Tibial artery (tissue), 4 donors: ENCODE measurements at regions of chr4 and their contacts with region 1.

Region 1: DNA sequence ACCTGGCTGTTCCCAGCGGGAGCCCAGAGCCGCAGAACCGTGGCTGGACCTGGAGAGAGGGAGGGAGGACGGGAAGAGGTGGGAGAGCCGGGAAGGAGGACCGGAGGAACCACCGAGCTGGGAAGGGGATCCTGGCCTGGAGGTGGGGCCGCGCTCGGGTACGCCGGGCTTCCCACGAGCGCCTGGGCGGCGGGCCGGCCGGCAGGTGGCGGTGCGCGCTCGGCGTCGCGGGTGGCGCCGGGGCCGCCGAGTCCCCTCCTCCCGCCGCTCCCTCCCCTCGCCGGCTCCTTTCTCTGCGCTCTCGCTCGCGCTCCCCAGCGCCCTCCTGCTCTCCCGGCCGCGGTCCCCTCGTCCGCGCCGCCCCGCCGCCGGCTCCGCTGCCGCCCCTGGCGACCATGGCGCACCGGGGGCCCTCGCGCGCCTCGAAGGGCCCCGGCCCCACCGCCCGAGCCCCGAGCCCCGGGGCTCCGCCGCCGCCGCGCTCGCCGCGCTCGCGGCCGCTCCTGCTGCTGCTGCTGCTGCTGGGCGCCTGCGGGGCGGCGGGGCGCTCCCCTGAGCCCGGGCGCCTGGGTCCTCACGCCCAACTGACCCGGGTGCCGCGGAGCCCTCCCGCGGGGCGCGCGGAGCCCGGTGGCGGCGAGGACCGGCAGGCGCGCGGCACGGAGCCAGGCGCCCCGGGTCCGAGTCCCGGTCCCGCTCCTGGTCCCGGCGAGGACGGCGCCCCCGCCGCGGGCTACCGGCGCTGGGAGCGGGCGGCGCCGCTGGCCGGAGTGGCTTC is at the start of gene SORCS2:
- DNase-seq: peak; percentile 21 to 79
- H3K4me3 ChIP-seq: peak within 1 kb of the TSS; percentile 35 to 44
- H3K27ac ChIP-seq: no peak within 1 kb of the TSS
- H3K4me1 ChIP-seq: peaks cover 0 to 20% (median 17%) of the 10 kb centered on the region in 4 donors
- H3K27me3 ChIP-seq: peaks cover 0 to 71% of the 10 kb centered on the region in 2 donors
- CTCF ChIP-seq: peak; percentile 54 to 91

Region 2: GRCh38 chr4:6308899-6309643 is 883.4 kb before region 1 on chr4:
- intact Hi-C with region 1: no loop called
- DNase-seq: no peak
- H3K4me3 ChIP-seq: peak overlapping the region; percentile 29 to 54
- H3K27ac ChIP-seq: no peak overlapping the region
- H3K4me1 ChIP-seq: peaks cover 0 to 12% (median 6%) of the 10 kb centered on the region in 4 donors
- H3K27me3 ChIP-seq: peaks cover 0 to 12% of the 10 kb centered on the region in 2 donors
- CTCF ChIP-seq: no peak

Region 3: DNA sequence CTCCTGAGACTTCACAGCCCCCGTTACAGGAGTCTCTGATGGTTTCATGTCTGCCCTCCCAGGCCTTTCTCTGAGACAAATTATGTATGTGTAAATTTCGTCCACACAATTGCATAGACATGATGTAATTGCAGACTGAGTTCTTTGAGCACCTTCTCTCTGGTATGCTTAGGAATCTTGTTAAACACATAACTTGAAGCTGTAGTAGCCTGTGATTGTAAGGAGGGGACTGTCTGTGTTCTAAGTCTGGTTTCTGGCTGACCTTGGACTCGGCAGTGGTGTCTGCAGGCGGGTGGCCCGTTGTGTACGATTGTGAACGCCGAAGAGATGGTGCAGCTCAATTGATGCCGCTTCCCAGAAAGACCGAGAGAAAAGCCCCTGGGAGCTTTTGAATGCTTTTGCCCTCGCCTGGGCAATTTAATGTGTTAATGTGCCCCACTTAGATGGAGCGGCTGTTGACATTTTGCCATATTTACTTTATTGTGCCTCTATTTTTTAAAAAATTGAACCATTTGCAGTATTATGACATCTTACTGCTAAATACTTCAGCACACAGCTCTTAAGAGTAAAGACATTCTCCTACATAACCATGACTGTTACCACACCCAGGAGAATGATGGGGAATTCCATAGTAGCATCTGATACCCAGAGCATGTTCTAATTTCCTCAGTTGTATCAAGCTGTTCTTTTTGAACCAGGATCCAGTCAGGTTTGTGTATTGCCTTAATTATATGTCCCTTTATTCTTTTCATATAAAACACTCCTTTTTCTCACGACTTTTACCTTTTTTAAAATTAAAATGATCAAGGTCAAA is 207.6 kb before region 1 on chr4:
- intact Hi-C with region 1: no loop called
- DNase-seq: no peak
- H3K4me3 ChIP-seq: no peak overlapping the region
- H3K27ac ChIP-seq: peak overlapping the region; percentile 96 to 98
- H3K4me1 ChIP-seq: peaks cover 0 to 42% (median 33%) of the 10 kb centered on the region in 4 donors
- H3K27me3 ChIP-seq: no peaks in the 10 kb centered on the region
- CTCF ChIP-seq: no peak

Region 4: DNA sequence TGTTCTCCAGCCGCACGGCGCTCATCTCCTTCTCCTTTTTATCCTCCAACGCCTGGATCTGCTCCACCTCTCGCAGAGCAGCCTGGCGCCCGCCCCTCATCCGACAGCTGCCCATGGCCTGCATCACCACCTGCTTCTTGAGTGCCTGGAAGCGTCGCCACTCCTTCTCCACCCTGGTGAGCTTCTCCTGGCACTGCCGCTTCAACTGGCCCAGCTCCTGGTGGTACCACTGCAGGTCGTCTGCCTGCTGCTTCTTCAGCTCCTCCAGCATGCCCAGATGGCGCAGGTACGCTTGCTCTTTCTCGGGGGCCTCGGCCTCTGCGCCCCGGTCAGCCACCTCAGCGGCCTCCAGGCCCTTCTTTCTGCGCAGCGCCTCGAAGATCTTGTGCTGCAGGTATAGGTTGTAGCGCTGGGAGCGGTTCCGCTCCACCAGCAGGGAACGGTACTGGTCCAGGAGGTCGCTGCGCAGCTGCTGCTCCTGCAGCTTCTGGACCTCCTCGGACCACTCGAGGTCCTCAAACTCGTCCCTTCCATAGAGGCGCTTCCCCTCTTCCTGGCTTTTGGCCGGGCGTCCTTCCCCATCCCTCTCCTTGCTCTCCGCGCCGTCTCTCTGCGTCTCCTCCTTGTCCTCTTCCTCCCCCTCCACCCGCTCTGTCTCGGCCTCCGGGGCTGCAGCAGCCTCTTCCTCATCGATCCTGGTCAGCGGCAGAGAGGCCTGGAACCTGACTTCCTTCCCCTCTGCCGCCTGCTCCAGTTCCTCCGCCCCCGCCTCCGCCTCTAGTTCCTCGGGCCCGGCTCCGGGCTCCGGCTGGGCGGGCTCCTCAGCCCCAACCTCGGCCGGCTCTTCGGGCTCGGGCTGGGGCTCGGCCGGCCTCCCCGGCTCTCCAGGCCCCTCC is 150.4 kb before region 1 on chr4:
- intact Hi-C with region 1: no loop called
- DNase-seq: peak; percentile 63 to 77
- H3K4me3 ChIP-seq: peak overlapping the region; percentile 63 to 70
- H3K27ac ChIP-seq: peak overlapping the region; percentile 58 to 78
- H3K4me1 ChIP-seq: peaks cover 0 to 43% (median 37%) of the 10 kb centered on the region in 4 donors
- H3K27me3 ChIP-seq: no peaks in the 10 kb centered on the region
- CTCF ChIP-seq: no peak

Region 5: GRCh38 chr4:7295911-7296660 is 103.6 kb after region 1 on chr4:
- intact Hi-C with region 1: loop called (anchors 5 kb)
- DNase-seq: no peak
- H3K4me3 ChIP-seq: no peak overlapping the region
- H3K27ac ChIP-seq: no peak overlapping the region
- H3K4me1 ChIP-seq: peaks cover 3 to 19% (median 11%) of the 10 kb centered on the region in 4 donors
- H3K27me3 ChIP-seq: peaks cover 0 to 29% of the 10 kb centered on the region in 2 donors
- CTCF ChIP-seq: peak; percentile 50 to 65

Region 6: DNA sequence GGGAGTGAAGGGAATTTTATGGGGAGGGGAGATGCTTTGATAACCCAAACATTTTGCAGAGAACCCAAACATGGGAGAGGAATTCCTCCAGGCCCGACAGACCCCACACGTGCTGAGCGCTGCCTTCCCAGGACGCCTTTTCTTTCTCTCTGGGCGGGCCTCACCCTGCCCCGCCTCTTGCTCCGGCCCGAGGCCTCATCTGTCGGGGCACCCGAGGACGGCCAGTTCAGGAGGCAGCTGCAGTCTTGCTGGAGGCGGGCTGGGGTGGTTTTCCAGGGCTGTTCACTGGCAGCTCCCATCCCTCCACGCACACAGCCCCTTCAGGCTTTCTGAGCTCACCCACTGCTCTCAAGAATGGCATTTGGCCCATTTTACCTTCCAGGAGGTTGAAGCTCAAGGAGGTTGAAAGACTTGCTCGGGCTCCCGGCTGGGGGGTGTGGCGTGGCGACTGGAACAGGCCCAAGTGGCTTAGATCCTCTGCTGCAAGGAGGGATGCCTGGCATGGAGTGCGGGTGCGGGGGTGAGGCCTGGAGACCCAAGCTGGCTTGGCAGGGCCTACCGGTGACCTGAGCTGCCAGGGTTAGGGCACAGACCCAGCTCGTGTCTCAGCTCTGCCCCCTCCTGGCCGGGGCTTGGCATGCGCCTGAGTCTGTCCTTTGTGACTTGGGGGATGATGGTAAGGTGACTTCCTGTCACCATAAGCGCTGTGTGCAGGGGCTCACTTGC is 143.1 kb after region 1 on chr4:
- intact Hi-C with region 1: loop called (anchors 1 kb)
- DNase-seq: peak in 1 of 2 donors; percentile 73
- H3K4me3 ChIP-seq: no peak overlapping the region
- H3K27ac ChIP-seq: peak overlapping the region in 1 of 2 donors; percentile 36
- H3K4me1 ChIP-seq: peaks cover 0 to 23% (median 9%) of the 10 kb centered on the region in 4 donors
- H3K27me3 ChIP-seq: no peaks in the 10 kb centered on the region
- CTCF ChIP-seq: peak; percentile 37 to 50

Region 7: GRCh38 chr4:7595934-7596461 is 403.6 kb after region 1 on chr4:
- intact Hi-C with region 1: no loop called
- DNase-seq: no peak
- H3K4me3 ChIP-seq: no peak overlapping the region
- H3K27ac ChIP-seq: no peak overlapping the region
- H3K4me1 ChIP-seq: no peaks in the 10 kb centered on the region
- H3K27me3 ChIP-seq: peaks cover 0 to 46% of the 10 kb centered on the region in 2 donors
- CTCF ChIP-seq: no peak

Region 8: GRCh38 chr4:7719354-7720174 is 527.1 kb after region 1 on chr4:
- intact Hi-C with region 1: loop called (anchors 5 kb)
- DNase-seq: peak in 1 of 2 donors; percentile 35
- H3K4me3 ChIP-seq: no peak overlapping the region
- H3K27ac ChIP-seq: no peak overlapping the region
- H3K4me1 ChIP-seq: peaks cover 0 to 6% (median 2%) of the 10 kb centered on the region in 4 donors
- H3K27me3 ChIP-seq: peaks cover 0 to 9% of the 10 kb centered on the region in 2 donors
- CTCF ChIP-seq: peak; percentile 72 to 78